ENCODE measurements at regions of chr11 and their contacts with region 1.

Region 1: DNA sequence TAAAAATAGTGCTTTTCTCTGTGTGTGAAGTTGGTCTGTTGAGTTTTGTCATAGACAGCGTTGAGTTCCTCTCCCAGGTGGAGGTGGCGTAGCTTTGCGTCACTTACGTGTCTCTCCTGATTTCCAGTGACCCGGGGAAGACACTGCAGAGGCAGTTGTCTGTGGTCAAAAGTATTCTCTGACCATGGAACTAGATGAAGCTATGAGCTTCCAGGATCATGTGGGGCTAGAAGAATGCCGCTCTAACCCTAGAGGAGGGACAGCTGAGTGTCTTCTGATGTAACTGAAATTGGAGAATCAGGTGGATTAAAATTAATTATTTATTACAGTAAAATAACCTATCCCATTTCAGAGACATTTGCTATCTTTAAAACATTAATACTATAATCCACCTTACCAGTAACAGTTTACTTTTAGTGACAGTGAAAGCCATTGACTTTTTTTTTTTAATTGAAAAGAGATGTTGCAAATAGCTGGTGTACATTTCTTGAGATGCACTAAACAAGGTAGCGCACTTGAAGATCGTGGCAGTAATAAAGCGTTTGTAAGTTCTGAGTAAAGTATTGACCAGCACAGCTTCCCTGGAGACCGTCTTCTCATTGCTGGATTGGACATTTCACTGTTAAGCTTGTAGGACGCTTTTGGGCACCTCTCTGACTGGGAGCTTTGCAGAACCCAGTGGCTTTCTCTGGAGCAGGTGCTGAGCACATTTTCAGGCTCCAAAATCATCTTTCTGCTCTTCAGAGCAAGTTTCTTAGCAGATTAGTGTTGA is 9.7 kb downstream of the CAT start:
- DNase-seq: peak in 1 of 2 experiments; percentile 27
- H3K4me3 ChIP-seq: no peak overlapping the region
- H3K27ac ChIP-seq: no peak overlapping the region
- H3K4me1 ChIP-seq: no peaks in the 10 kb centered on the region
- H3K27me3 ChIP-seq: no peaks in the 10 kb centered on the region
- CTCF ChIP-seq: no peak

Region 2: GRCh38 chr11:34051349-34052035 is 396.9 kb before region 1 on chr11 and contains the start of gene CAPRIN1:
- CTCF ChIA-PET with region 1: no interaction called
- POLR2A ChIA-PET with region 1: interaction called, 11 read pairs
- intact Hi-C with region 1: no loop called
- DNase-seq: peak; percentile 84 to 93
- H3K4me3 ChIP-seq: peak within 1 kb of the TSS; percentile 72
- H3K27ac ChIP-seq: peak within 1 kb of the TSS; percentile 94
- H3K4me1 ChIP-seq: peaks cover 39% of the 10 kb centered on the region
- H3K27me3 ChIP-seq: no peaks in the 10 kb centered on the region
- CTCF ChIP-seq: no peak
- total RNA-seq, gene CAPRIN1: 258 and 289 TPM in 2 replicates

Measured in PC-9 (cell line).